ENCODE measurements at regions of chr2 and their contacts with region 1.

Region 1: DNA sequence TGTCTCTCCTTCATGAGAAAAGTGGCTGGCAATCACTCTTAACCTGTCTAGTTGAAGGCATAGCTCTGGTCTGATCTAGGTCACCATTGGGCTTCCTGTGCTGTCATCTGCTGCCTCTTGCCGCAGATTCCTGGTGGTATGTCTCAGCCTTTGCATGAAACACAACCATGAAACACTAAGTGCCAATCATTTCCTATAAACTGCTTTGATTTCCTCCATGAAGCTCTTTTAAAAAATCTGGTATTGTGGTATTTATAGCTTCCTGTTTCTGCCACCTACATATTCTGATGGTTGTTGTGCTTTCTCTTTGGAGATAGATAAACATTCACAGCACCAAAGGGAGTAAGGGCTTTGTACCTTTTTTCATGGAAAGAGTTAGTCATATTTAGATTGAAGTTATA is 120.0 kb upstream of the EPC2 start:
- DNase-seq: peak; percentile 58
- H3K4me3 Mint-ChIP-seq: peak overlapping the region; percentile 49
- H3K27ac Mint-ChIP-seq: peak overlapping the region; percentile 95
- H3K4me1 Mint-ChIP-seq: peaks cover 84% of the 10 kb centered on the region
- H3K27me3 Mint-ChIP-seq: no peaks in the 10 kb centered on the region

Region 2: GRCh38 chr2:147297820-147298219 is 1226.7 kb before region 1 on chr2:
- intact Hi-C with region 1: loop called (anchors 5 kb)
- DNase-seq: peak; percentile 49
- H3K4me3 Mint-ChIP-seq: peak overlapping the region; percentile 36
- H3K27ac Mint-ChIP-seq: peak overlapping the region; percentile 89
- H3K4me1 Mint-ChIP-seq: peaks cover 72% of the 10 kb centered on the region
- H3K27me3 Mint-ChIP-seq: no peaks in the 10 kb centered on the region

Region 3: GRCh38 chr2:148020111-148021058 is 504.1 kb before region 1 on chr2 and contains the start of gene ORC4:
- intact Hi-C with region 1: loop called (anchors 1 kb)
- DNase-seq: peak; percentile 95
- H3K4me3 Mint-ChIP-seq: peak within 1 kb of the TSS; percentile 98
- H3K27ac Mint-ChIP-seq: peak within 1 kb of the TSS; percentile 95
- H3K4me1 Mint-ChIP-seq: peaks cover 40% of the 10 kb centered on the region
- H3K27me3 Mint-ChIP-seq: no peaks in the 10 kb centered on the region
- total RNA-seq, gene ORC4: 29.2 and 34.2 TPM in 2 replicates

Region 4: DNA sequence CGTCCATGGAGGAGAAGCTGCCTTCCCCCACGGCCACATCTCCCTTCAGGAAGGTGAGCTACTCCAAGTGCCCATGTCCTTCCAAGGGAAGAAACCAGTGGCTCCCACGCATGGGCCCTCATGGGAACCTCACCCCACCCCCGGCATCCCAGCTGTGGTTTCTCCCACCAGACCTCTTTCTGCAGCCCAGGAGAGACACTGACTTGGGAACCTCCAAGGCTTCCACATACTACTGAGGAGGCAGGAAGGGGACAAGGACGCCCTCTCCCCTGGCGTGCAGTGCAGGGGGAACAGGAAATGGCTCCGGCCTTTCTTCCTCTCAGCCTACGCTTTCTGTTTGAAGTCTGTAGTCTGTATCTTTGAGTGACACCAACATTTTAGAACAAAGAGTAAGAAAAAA is 15.5 kb after region 1 on chr2:
- intact Hi-C with region 1: loop called (anchors 1 kb)
- DNase-seq: no peak
- H3K4me3 Mint-ChIP-seq: peak overlapping the region; percentile 45
- H3K27ac Mint-ChIP-seq: peak overlapping the region; percentile 76
- H3K4me1 Mint-ChIP-seq: peaks cover 62% of the 10 kb centered on the region
- H3K27me3 Mint-ChIP-seq: no peaks in the 10 kb centered on the region

Region 5: GRCh38 chr2:148614322-148615049 is 90.0 kb after region 1 on chr2:
- intact Hi-C with region 1: loop called (anchors 1 kb)
- DNase-seq: no peak
- H3K4me3 Mint-ChIP-seq: peak overlapping the region; percentile 41
- H3K27ac Mint-ChIP-seq: peak overlapping the region; percentile 47
- H3K4me1 Mint-ChIP-seq: peaks cover 16% of the 10 kb centered on the region
- H3K27me3 Mint-ChIP-seq: peaks cover 4% of the 10 kb centered on the region

Region 6: DNA sequence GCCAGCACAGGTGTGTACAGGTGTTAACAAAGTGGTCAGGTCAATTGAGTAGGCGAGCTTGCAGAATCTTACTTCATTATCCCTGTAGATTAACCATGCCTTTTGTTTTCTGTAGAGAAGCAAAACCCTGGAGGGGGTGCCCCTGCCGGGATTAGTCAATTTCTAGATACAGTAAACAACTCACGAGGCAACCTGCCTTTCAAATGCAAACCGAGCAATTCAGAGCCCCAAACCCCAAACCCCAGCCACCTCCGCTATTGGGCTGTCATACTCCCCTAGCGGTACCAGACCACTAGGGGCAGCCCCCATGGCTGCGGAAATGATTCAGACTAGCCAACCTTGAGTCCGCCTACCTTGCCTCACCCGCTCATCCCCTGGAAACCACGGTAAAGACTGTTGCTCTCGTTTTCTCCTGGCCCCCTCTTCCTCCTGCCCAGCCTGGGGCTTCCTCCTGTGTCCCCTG is 289.1 kb after region 1 on chr2:
- intact Hi-C with region 1: loop called (anchors 5 kb)
- DNase-seq: peak; percentile 43
- H3K4me3 Mint-ChIP-seq: no peak overlapping the region
- H3K27ac Mint-ChIP-seq: no peak overlapping the region
- H3K4me1 Mint-ChIP-seq: peaks cover 11% of the 10 kb centered on the region
- H3K27me3 Mint-ChIP-seq: peaks cover 13% of the 10 kb centered on the region

Measured in activated T-helper 1 cell treated with anti-CD3 and anti-CD28 coated beads, Interleukin-12 subunit alpha, Interleukin-12 subunit beta, Interleukin-2, Interleukin-4 antibody, amounts not matched to agents 30 ng/mL and 10 ng/mL and 1 ng/mL, durations not matched to agents 14 hours and 24 hours and 36 hours (primary cell).